CD8-positive, alpha-beta T cell (primary cell): ENCODE measurements at regions of chr9 and their contacts with region 1.

Region 1: GRCh38 chr9:88835038-88835466 is 156.2 kb upstream of the S1PR3 start:
- DNase-seq: peak in 2 of 9 experiments; percentile 57 to 78
- ATAC-seq: peak; percentile 89
- H3K4me3 ChIP-seq: no peak overlapping the region
- H3K4me3 Mint-ChIP-seq: peak overlapping the region; percentile 23
- H3K27ac ChIP-seq: no peak overlapping the region
- H3K27ac Mint-ChIP-seq: peak overlapping the region; percentile 3
- H3K4me1 ChIP-seq: peaks cover 21% of the 10 kb centered on the region
- H3K4me1 Mint-ChIP-seq: peaks cover 25% of the 10 kb centered on the region
- H3K27me3 ChIP-seq: peaks cover 0 to 28% of the 10 kb centered on the region in 2 experiments
- H3K27me3 Mint-ChIP-seq: peaks cover 61% of the 10 kb centered on the region
- CTCF ChIP-seq: no peak

Region 2: DNA sequence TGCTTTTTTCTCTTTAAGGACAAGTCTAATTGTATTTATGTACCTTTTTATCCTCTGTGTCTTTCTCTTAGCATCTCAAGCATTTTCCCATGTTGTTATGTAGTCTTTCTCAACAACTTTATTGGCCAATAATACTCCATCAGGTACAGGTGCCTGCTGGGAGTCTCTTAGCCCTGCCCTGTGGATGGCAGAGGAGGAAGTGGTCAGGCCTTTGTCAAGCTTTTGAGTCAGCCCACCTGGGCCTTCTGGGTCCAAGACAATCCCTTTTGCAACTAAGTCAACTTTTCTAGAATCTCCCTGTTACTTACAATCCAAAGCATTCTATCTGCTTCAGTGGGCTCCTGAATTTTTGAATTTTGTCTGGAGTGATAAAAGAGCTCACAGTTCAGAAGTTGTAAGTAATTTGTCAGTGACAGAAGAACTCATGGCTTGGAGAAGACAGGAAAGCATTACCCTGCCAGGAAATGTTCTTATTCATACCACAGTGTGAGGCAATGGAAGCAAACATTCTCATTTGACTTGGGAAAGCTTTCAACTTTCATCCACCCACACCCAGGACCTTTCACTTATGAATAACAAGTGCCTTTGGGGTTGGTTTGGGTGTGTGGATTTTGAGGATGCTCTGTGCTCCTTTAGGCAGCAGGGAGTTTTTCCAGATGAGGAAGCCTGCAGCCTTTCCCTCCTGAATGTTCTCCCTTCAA is 43.8 kb before region 1 on chr9:
- CTCF ChIA-PET with region 1: no interaction called
- POLR2A ChIA-PET with region 1: no interaction called
- intact Hi-C with region 1: no loop called
- DNase-seq: no peak
- ATAC-seq: no peak
- H3K4me3 ChIP-seq: no peak overlapping the region
- H3K4me3 Mint-ChIP-seq: no peak overlapping the region
- H3K27ac ChIP-seq: no peak overlapping the region
- H3K27ac Mint-ChIP-seq: no peak overlapping the region
- H3K4me1 ChIP-seq: no peaks in the 10 kb centered on the region
- H3K4me1 Mint-ChIP-seq: peaks cover 8% of the 10 kb centered on the region
- H3K27me3 ChIP-seq: no peaks in the 10 kb centered on the region
- H3K27me3 Mint-ChIP-seq: peaks cover 10% of the 10 kb centered on the region
- CTCF ChIP-seq: no peak

Region 3: GRCh38 chr9:88889386-88889785 is 54.3 kb after region 1 on chr9:
- CTCF ChIA-PET with region 1: interaction called, 3 read pairs
- POLR2A ChIA-PET with region 1: no interaction called
- intact Hi-C with region 1: loop called in 1 of 2 experiments (anchors 2 kb)
- DNase-seq: no peak
- ATAC-seq: no peak
- H3K4me3 ChIP-seq: no peak overlapping the region
- H3K4me3 Mint-ChIP-seq: no peak overlapping the region
- H3K27ac ChIP-seq: no peak overlapping the region
- H3K27ac Mint-ChIP-seq: no peak overlapping the region
- H3K4me1 ChIP-seq: peaks cover 7% of the 10 kb centered on the region
- H3K4me1 Mint-ChIP-seq: peaks cover 18% of the 10 kb centered on the region
- H3K27me3 ChIP-seq: no peaks in the 10 kb centered on the region
- H3K27me3 Mint-ChIP-seq: peaks cover 19% of the 10 kb centered on the region
- CTCF ChIP-seq: no peak

Region 4: DNA sequence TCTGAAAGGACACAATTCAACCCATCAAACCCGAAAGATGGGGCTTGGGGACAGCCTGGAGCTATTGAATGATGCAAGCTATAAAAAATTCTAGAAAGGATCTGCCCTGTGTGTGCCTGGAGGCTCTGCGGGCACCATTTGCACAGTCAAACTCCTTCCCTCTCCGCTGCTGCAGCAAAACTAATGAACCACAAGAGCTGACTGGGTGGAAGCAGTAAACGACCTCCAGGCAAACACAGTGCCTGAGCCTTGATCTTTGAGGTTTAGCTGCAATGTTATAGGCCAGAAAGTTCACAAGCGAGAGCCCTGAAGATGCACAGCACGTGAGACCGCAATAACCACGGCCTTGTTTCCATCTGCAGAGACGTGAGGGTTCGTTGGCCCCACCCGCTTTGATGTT is 87.0 kb after region 1 on chr9:
- CTCF ChIA-PET with region 1: no interaction called
- POLR2A ChIA-PET with region 1: no interaction called
- intact Hi-C with region 1: loop called (anchors 1 to 5 kb)
- DNase-seq: peak; percentile 14 to 86 (median 56)
- ATAC-seq: peak; percentile 87
- H3K4me3 ChIP-seq: peak overlapping the region in 1 of 2 experiments; percentile 18
- H3K4me3 Mint-ChIP-seq: peak overlapping the region; percentile 66
- H3K27ac ChIP-seq: no peak overlapping the region
- H3K27ac Mint-ChIP-seq: peak overlapping the region; percentile 53
- H3K4me1 ChIP-seq: peaks cover 42% of the 10 kb centered on the region
- H3K4me1 Mint-ChIP-seq: peaks cover 54% of the 10 kb centered on the region
- H3K27me3 ChIP-seq: no peaks in the 10 kb centered on the region
- H3K27me3 Mint-ChIP-seq: peaks cover under 1% of the 10 kb centered on the region
- CTCF ChIP-seq: no peak